ENCODE measurements at regions of chr14 and their contacts with region 1.

Region 1: DNA sequence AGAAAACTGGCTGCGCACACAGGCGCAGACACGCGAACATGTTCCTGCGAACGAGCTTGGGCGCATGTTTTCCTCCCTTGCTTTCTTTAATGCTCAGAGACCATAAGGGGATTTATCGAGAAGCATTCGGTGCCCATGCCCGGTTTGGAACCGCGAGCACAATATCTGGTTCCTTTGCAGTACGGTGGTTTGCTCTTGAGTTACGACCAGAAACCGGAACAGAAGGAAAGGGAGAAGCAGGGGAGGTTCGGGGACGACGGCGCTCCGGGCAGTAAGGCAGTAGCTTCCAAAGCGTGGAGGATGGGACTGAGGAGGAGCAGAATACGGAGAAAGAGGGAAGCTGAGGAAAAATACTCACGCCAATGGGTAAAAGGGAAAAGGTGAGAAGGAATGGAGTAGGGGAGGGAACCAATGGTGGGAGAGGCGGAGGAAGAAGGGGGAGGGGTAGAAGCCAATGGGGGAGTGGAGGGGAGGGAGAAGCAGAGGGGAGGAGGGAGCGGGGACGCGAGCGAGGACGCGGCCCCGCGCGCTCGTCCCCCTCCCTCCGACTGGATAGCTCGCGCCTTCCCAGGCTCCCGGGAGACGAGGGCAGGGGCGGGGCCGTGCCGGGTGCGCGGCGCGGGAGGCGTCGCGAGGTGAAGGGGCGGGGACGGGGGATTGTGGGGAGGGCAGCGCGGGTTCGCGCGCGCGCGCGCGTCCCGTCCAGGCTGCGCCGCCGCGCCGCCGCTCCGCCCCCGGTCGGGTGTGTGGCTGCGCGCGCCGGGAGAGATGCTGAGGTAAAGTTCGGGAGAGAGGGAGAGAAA is 625 bp upstream of the ARHGAP5 start:
- DNase-seq: peak; percentile 95
- ATAC-seq: peak; percentile 90
- H3K4me3 ChIP-seq: peak overlapping the region; percentile 78
- H3K27ac ChIP-seq: peak overlapping the region; percentile 89
- H3K4me1 ChIP-seq: no peaks in the 10 kb centered on the region
- H3K27me3 ChIP-seq: no peaks in the 10 kb centered on the region
- CTCF ChIP-seq: no peak
- POLR2A ChIP-seq: peak; percentile 35; the same call in 1 of the 2 replicates
- RAD21 ChIP-seq: no peak

Region 2: DNA sequence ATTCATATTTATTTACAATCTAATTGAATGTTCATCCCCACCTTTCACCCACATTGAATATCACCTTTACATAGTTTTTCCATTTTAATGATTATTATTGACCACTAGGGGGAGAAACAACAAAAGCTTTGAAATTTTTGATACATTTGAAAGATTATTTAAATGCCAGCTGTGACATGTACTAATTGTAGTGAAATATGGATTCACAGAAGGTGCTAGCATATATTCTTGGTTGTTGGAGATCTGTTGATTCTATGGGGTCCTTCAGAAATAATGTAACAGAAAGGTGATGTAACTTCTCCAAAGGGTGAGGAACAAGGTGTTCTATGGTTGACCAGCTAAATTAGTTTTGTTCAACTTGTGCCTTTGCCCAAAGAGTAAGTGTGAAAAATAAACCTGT is 566.3 kb before region 1 on chr14:
- CTCF ChIA-PET with region 1: no interaction called
- POLR2A ChIA-PET with region 1: interaction called, 3 read pairs
- dilution Hi-C with region 1: no loop called
- in situ Hi-C with region 1: no loop called
- intact Hi-C with region 1: loop called (anchors 5 kb)
- DNase-seq: peak; percentile 10
- ATAC-seq: no peak
- H3K4me3 ChIP-seq: no peak overlapping the region
- H3K27ac ChIP-seq: no peak overlapping the region
- H3K4me1 ChIP-seq: peaks cover 5% of the 10 kb centered on the region
- H3K27me3 ChIP-seq: peaks cover 3% of the 10 kb centered on the region; the same call in 1 of the 2 replicates
- CTCF ChIP-seq: peak; percentile 55
- POLR2A ChIP-seq: no peak
- RAD21 ChIP-seq: peak; percentile 58

Region 3: DNA sequence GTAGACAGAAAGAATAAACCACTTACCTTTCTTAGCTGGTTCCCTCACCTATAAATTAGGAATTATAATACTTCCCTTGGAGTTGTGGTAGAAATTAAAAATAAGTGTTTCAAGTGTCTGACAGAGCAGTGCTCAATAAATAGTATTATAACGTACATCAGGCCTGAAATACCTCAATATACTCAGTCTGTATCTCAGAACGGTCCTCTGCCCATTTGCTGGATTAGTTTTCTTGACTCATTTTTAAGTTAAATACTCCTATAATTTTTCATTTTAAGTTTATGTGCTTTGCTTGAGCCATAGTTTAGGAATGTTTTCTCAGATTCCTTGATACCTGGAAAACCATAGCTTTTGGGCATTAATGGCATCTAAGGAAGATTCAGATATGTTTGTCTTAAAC is 23.0 kb after region 1 on chr14:
- CTCF ChIA-PET with region 1: no interaction called
- POLR2A ChIA-PET with region 1: no interaction called
- dilution Hi-C with region 1: no loop called
- in situ Hi-C with region 1: no loop called
- intact Hi-C with region 1: loop called (anchors 2 kb)
- DNase-seq: no peak
- ATAC-seq: no peak
- H3K4me3 ChIP-seq: no peak overlapping the region
- H3K27ac ChIP-seq: no peak overlapping the region
- H3K4me1 ChIP-seq: peaks cover 2% of the 10 kb centered on the region; the same call in 1 of the 2 replicates
- H3K27me3 ChIP-seq: no peaks in the 10 kb centered on the region
- CTCF ChIP-seq: no peak
- POLR2A ChIP-seq: no peak
- RAD21 ChIP-seq: no peak

Region 4: GRCh38 chr14:32370720-32371119 is 294.2 kb after region 1 on chr14:
- CTCF ChIA-PET with region 1: no interaction called
- POLR2A ChIA-PET with region 1: no interaction called
- dilution Hi-C with region 1: no loop called
- in situ Hi-C with region 1: no loop called
- intact Hi-C with region 1: loop called (anchors 5 kb)
- DNase-seq: peak; percentile 89
- ATAC-seq: peak; percentile 83
- H3K4me3 ChIP-seq: no peak overlapping the region
- H3K27ac ChIP-seq: no peak overlapping the region
- H3K4me1 ChIP-seq: peaks cover 18% of the 10 kb centered on the region
- H3K27me3 ChIP-seq: no peaks in the 10 kb centered on the region
- CTCF ChIP-seq: no peak
- POLR2A ChIP-seq: no peak
- RAD21 ChIP-seq: no peak

Region 5: GRCh38 chr14:32509632-32510187 is 433.2 kb after region 1 on chr14:
- CTCF ChIA-PET with region 1: interaction called, 3 read pairs
- POLR2A ChIA-PET with region 1: no interaction called
- dilution Hi-C with region 1: no loop called
- in situ Hi-C with region 1: no loop called
- intact Hi-C with region 1: loop called (anchors 1 kb)
- DNase-seq: peak; percentile 97
- ATAC-seq: peak; percentile 87
- H3K4me3 ChIP-seq: no peak overlapping the region
- H3K27ac ChIP-seq: peak overlapping the region; percentile 83
- H3K4me1 ChIP-seq: peaks cover 17% of the 10 kb centered on the region
- H3K27me3 ChIP-seq: no peaks in the 10 kb centered on the region
- CTCF ChIP-seq: no peak
- POLR2A ChIP-seq: peak; percentile 40; the same call in 1 of the 2 replicates
- RAD21 ChIP-seq: no peak